Activated CD8-positive, alpha-beta T cell treated with anti-CD3 and anti-CD28 coated beads for 36 hours (primary cell): ENCODE measurements at regions of chr1 and their contacts with region 1.

Region 1: GRCh38 chr1:223123011-223123610 is 19.9 kb downstream of the TLR5 start:
- DNase-seq: no peak
- ATAC-seq: no peak
- H3K4me3 Mint-ChIP-seq: no peak overlapping the region
- H3K27ac Mint-ChIP-seq: no peak overlapping the region
- H3K4me1 Mint-ChIP-seq: peaks cover 7% of the 10 kb centered on the region
- H3K27me3 Mint-ChIP-seq: no peaks in the 10 kb centered on the region
- CTCF ChIP-seq: no peak

Region 2: GRCh38 chr1:222817529-222817928 is 305.6 kb before region 1 on chr1:
- CTCF ChIA-PET with region 1: interaction called, 11 read pairs
- POLR2A ChIA-PET with region 1: no interaction called
- intact Hi-C with region 1: no loop called
- DNase-seq: no peak
- ATAC-seq: no peak
- H3K4me3 Mint-ChIP-seq: no peak overlapping the region
- H3K27ac Mint-ChIP-seq: no peak overlapping the region
- H3K4me1 Mint-ChIP-seq: peaks cover 42% of the 10 kb centered on the region
- H3K27me3 Mint-ChIP-seq: no peaks in the 10 kb centered on the region
- CTCF ChIP-seq: no peak

Region 3: DNA sequence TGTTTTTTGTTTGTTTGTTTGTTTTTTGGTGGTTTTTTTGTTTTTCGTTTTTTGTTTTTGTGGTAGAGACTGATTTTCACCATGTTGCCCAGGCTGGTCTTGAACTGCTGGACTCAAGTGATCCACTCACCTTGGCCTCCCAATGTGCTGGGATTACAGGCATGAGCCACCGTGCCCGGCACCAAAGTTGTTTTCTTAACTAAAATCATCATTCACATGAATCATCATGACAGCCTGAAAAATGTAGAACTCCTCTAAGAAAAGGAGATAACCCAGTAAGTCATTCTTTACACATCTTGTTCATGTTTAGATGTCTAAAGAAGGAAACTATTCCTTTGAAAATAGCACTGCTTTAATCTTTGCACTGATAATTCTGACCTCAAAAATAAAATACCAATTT is 270.8 kb before region 1 on chr1:
- CTCF ChIA-PET with region 1: no interaction called
- POLR2A ChIA-PET with region 1: no interaction called
- intact Hi-C with region 1: no loop called
- DNase-seq: no peak
- ATAC-seq: no peak
- H3K4me3 Mint-ChIP-seq: no peak overlapping the region
- H3K27ac Mint-ChIP-seq: no peak overlapping the region
- H3K4me1 Mint-ChIP-seq: peaks cover 3% of the 10 kb centered on the region
- H3K27me3 Mint-ChIP-seq: no peaks in the 10 kb centered on the region
- CTCF ChIP-seq: no peak

Region 4: DNA sequence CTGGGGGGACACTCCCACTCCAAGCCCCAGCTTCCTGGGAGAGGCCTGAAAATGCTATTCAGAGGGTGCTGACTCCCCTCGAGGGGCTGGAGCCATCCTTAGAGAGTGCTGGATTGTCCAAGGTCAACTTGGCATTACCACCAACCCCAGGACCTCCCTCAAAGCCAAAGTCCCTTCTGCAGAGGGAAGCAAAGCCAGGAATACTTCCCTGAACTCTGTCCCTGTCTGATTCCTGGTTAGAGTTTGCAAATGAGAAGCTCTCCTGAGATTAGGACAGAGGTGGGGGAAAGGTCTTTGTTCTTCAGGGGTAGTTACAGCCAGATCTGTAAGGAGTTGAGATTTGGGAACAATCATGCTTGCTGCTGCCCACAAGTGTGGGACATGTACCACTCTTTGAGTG is 25.4 kb before region 1 on chr1:
- CTCF ChIA-PET with region 1: interaction called, 15 read pairs
- POLR2A ChIA-PET with region 1: no interaction called
- intact Hi-C with region 1: no loop called
- DNase-seq: no peak
- ATAC-seq: no peak
- H3K4me3 Mint-ChIP-seq: no peak overlapping the region
- H3K27ac Mint-ChIP-seq: no peak overlapping the region
- H3K4me1 Mint-ChIP-seq: no peaks in the 10 kb centered on the region
- H3K27me3 Mint-ChIP-seq: peaks cover 2% of the 10 kb centered on the region
- CTCF ChIP-seq: no peak

Region 5: DNA sequence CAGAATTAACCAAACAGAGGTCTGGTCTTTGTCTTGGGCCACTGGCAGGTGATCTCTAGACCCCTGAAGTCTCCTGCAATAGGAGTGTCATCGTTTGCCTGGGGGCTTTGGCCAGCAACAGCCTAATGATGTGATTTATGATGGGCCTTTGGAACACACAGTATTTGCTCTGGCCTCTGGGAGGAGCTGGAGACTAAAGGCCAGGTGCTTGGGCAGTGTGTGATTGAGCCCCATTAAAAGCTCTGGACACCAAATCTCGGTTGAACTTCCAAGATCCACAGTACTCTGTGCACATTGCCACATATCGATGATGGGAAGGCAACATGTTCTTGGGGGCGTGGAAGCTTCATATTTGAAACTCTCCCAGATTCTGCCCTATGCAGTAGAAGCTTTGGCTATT is 51.9 kb after region 1 on chr1:
- CTCF ChIA-PET with region 1: interaction called, 10 read pairs
- POLR2A ChIA-PET with region 1: no interaction called
- intact Hi-C with region 1: no loop called
- DNase-seq: no peak
- ATAC-seq: no peak
- H3K4me3 Mint-ChIP-seq: no peak overlapping the region
- H3K27ac Mint-ChIP-seq: no peak overlapping the region
- H3K4me1 Mint-ChIP-seq: peaks cover 3% of the 10 kb centered on the region
- H3K27me3 Mint-ChIP-seq: no peaks in the 10 kb centered on the region
- CTCF ChIP-seq: no peak

Region 6: GRCh38 chr1:223244366-223245103 is 121.4 kb after region 1 on chr1:
- CTCF ChIA-PET with region 1: interaction called, 12 read pairs
- POLR2A ChIA-PET with region 1: no interaction called
- intact Hi-C with region 1: no loop called
- DNase-seq: peak; percentile 69
- ATAC-seq: peak; percentile 95
- H3K4me3 Mint-ChIP-seq: no peak overlapping the region
- H3K27ac Mint-ChIP-seq: peak overlapping the region; percentile 33
- H3K4me1 Mint-ChIP-seq: peaks cover 48% of the 10 kb centered on the region
- H3K27me3 Mint-ChIP-seq: no peaks in the 10 kb centered on the region
- CTCF ChIP-seq: peak; percentile 61

Region 7: DNA sequence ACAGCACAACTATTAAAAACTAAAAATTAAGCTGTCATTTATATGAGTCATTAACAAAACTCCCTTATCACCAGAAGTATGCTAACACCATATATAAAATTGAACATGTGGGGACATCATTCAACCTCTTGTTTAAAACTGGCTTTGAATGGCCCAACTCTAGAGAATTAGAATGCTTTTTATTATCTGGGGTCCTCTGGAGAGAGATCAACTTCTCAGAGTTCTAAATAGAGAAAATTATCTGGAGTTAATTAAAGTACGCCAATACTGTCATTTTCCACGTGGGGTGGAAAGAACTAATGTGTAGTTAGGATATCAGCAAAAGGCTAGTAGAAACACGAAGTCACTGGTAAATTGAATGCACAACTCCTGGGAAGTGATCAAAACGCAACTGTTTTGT is 568.0 kb after region 1 on chr1:
- CTCF ChIA-PET with region 1: no interaction called
- POLR2A ChIA-PET with region 1: no interaction called
- intact Hi-C with region 1: no loop called
- DNase-seq: no peak
- ATAC-seq: no peak
- H3K4me3 Mint-ChIP-seq: no peak overlapping the region
- H3K27ac Mint-ChIP-seq: no peak overlapping the region
- H3K4me1 Mint-ChIP-seq: no peaks in the 10 kb centered on the region
- H3K27me3 Mint-ChIP-seq: peaks cover 1% of the 10 kb centered on the region
- CTCF ChIP-seq: no peak